CD8-positive, alpha-beta T cell (primary cell): ENCODE measurements at regions of chr10 and their contacts with region 1.

Region 1: DNA sequence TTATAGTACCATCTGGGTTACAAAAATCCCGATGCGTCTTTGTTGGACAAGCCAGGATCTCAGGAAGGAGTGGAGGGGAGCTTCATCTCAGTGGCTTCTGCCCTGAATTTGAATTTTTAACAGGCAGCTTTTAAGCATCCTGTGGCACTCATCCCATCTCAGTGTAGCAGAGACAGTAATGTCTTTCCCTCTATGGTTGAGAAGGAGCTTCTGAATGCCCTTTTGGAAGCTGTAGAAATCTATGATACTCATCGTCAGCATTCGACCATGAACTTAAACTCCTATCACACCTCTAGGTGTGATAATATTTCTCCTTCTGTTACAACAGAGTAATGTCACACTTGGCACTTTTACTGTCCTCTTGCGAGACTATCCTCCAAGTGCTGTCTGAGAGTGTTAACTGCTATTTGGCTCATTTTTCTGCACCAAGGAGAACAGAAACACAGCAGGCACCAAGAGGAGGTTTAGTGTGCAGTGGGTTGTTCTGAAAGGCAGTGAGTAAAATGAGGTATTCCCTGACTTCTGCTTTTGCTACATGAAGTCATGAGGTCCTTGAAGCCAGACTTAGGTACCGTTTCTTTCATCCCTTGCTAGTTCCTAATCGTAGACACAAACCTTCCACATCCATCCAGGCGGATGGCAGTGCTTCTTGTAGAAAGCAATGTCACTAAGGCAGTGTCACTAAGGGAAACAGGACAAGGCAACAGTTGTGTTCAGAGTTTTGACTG is 177.4 kb downstream of the CELF2 start:
- DNase-seq: peak in 1 of 9 experiments; percentile 51
- ATAC-seq: peak; percentile 23
- H3K4me3 ChIP-seq: no peak overlapping the region
- H3K4me3 Mint-ChIP-seq: peak overlapping the region; percentile 27
- H3K27ac ChIP-seq: peak overlapping the region in 1 of 2 experiments; percentile 28
- H3K27ac Mint-ChIP-seq: peak overlapping the region; percentile 83
- H3K4me1 ChIP-seq: peaks cover 93% of the 10 kb centered on the region
- H3K4me1 Mint-ChIP-seq: peaks cover 96% of the 10 kb centered on the region
- H3K27me3 ChIP-seq: no peaks in the 10 kb centered on the region
- H3K27me3 Mint-ChIP-seq: no peaks in the 10 kb centered on the region
- CTCF ChIP-seq: no peak

Region 2: GRCh38 chr10:9807846-9808245 is 1387.2 kb before region 1 on chr10:
- CTCF ChIA-PET with region 1: no interaction called
- POLR2A ChIA-PET with region 1: no interaction called
- intact Hi-C with region 1: no loop called
- DNase-seq: no peak
- ATAC-seq: no peak
- H3K4me3 ChIP-seq: no peak overlapping the region
- H3K4me3 Mint-ChIP-seq: no peak overlapping the region
- H3K27ac ChIP-seq: no peak overlapping the region
- H3K27ac Mint-ChIP-seq: no peak overlapping the region
- H3K4me1 ChIP-seq: no peaks in the 10 kb centered on the region
- H3K4me1 Mint-ChIP-seq: no peaks in the 10 kb centered on the region
- H3K27me3 ChIP-seq: no peaks in the 10 kb centered on the region
- H3K27me3 Mint-ChIP-seq: no peaks in the 10 kb centered on the region
- CTCF ChIP-seq: no peak

Region 3: DNA sequence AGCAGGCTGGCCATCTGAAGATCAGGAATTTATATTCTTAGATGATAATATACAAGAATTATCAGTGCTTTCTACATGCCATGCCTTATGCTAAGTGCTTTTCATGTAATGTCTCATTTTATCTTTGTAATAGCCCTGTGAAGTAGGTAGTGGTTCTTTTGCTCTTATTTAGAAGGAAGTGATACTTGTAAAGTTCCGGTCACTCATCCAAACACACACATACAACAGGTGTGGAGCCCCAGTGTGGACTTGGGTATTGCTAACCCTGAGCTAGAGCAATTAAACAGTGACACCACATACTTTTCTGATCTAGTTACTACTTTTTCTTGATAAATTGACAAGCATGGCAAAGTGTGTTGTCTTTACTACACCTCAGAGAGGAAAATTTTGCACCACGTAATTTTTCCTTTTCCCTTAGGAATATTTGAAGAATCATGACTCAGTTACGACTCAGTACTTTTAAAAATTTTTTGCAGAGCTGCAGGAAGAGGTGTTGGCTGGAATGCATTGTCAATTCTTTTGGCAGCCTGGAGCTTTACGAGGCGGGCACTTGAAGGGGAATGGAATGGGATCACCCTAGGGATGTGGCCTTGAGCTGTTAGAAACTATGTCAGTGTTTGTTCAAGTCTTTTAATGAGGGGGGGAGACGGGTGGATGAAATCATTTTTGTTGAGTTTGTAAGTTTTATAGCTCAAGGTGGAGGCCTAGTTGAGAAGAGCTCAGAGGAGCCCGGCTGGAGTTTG is 389.9 kb before region 1 on chr10:
- CTCF ChIA-PET with region 1: no interaction called
- POLR2A ChIA-PET with region 1: no interaction called
- intact Hi-C with region 1: no loop called
- DNase-seq: no peak
- ATAC-seq: no peak
- H3K4me3 ChIP-seq: no peak overlapping the region
- H3K4me3 Mint-ChIP-seq: no peak overlapping the region
- H3K27ac ChIP-seq: no peak overlapping the region
- H3K27ac Mint-ChIP-seq: no peak overlapping the region
- H3K4me1 ChIP-seq: no peaks in the 10 kb centered on the region
- H3K4me1 Mint-ChIP-seq: no peaks in the 10 kb centered on the region
- H3K27me3 ChIP-seq: no peaks in the 10 kb centered on the region
- H3K27me3 Mint-ChIP-seq: no peaks in the 10 kb centered on the region
- CTCF ChIP-seq: no peak

Region 4: DNA sequence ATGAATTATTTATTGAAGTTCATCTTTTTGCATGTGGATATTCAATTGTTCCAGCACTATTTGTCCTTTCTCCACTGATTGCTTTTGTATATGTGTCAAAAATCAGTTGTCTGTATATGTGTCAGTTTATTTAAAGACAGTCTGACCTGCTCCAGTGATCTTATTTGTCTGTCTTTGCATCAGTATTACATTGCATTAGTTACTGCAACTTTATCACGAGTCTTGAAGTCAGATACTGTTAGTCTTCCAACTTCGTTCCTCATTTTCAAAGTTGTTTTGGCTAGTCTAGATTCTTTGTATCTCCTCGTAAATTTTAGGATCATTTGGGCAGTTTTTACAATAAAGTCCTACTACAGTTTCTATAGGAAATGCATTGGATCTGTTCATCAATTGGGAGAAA is 10.9 kb before region 1 on chr10:
- CTCF ChIA-PET with region 1: interaction called, 4 read pairs
- POLR2A ChIA-PET with region 1: interaction called, 5 read pairs
- intact Hi-C with region 1: loop called in 1 of 2 experiments (anchors 1 kb)
- DNase-seq: no peak
- ATAC-seq: no peak
- H3K4me3 ChIP-seq: no peak overlapping the region
- H3K4me3 Mint-ChIP-seq: no peak overlapping the region
- H3K27ac ChIP-seq: peak overlapping the region in 1 of 2 experiments; percentile 14
- H3K27ac Mint-ChIP-seq: peak overlapping the region; percentile 77
- H3K4me1 ChIP-seq: peaks cover 92% of the 10 kb centered on the region
- H3K4me1 Mint-ChIP-seq: peaks cover 48% of the 10 kb centered on the region
- H3K27me3 ChIP-seq: no peaks in the 10 kb centered on the region
- H3K27me3 Mint-ChIP-seq: no peaks in the 10 kb centered on the region
- CTCF ChIP-seq: no peak

Region 5: GRCh38 chr10:11209830-11210181 is 14.8 kb after region 1 on chr10:
- CTCF ChIA-PET with region 1: interaction called, 5 read pairs
- POLR2A ChIA-PET with region 1: interaction called, 4 read pairs
- intact Hi-C with region 1: loop called (anchors 2 kb)
- DNase-seq: peak in 3 of 9 experiments; percentile 30 to 63 (median 32)
- ATAC-seq: no peak
- H3K4me3 ChIP-seq: peak overlapping the region in 1 of 2 experiments; percentile 18
- H3K4me3 Mint-ChIP-seq: peak overlapping the region; percentile 77
- H3K27ac ChIP-seq: peak overlapping the region; percentile 7 to 64
- H3K27ac Mint-ChIP-seq: peak overlapping the region; percentile 93
- H3K4me1 ChIP-seq: peaks cover 99% of the 10 kb centered on the region
- H3K4me1 Mint-ChIP-seq: peaks cover 96% of the 10 kb centered on the region
- H3K27me3 ChIP-seq: no peaks in the 10 kb centered on the region
- H3K27me3 Mint-ChIP-seq: no peaks in the 10 kb centered on the region
- CTCF ChIP-seq: no peak